HCT116 (cell line): ENCODE measurements at regions of chr7 and their contacts with region 1.

Region 1: GRCh38 chr7:155412537-155413253 is 45.2 kb upstream of the EN2 start:
- DNase-seq: peak; percentile 47
- ATAC-seq: peak; percentile 96
- H3K4me3 ChIP-seq: no peak overlapping the region; a peak in 1 of 4 replicates
- H3K27ac ChIP-seq: no peak overlapping the region
- H3K4me1 ChIP-seq: peaks cover 0 to 5% of the 10 kb centered on the region in 2 experiments; a peak in 1 of 4 replicates
- H3K27me3 ChIP-seq: no peaks in the 10 kb centered on the region
- CTCF ChIP-seq: peak; percentile 78 to 91 (median 84)
- POLR2A ChIP-seq: no peak
- RAD21 ChIP-seq: peak; percentile 62

Region 2: DNA sequence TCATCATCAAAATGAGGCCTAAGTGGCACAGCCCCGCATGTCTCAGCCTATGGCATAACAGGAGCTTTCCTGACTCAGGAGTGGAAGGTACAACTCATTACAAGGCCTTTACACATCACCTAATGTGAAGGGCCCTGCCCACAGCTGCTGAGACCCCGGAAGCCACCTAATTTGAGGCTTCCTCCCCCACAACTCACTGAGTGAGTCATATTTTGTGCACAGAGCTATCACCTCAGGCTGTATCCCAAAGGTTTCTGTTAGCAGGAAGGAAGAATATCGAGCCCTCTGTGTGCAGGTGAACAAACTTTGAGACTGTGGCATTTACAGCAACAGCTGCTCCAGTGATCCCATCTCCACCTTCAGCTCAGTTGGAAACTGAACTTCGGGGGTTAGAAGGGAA is 322.0 kb before region 1 on chr7:
- CTCF ChIA-PET with region 1: no interaction called
- POLR2A ChIA-PET with region 1: no interaction called
- RAD21 ChIA-PET with region 1: no interaction called
- intact Hi-C with region 1: no loop called
- DNase-seq: no peak
- ATAC-seq: no peak
- H3K4me3 ChIP-seq: no peak overlapping the region
- H3K27ac ChIP-seq: no peak overlapping the region
- H3K4me1 ChIP-seq: no peaks in the 10 kb centered on the region
- H3K27me3 ChIP-seq: peaks cover 43% of the 10 kb centered on the region
- CTCF ChIP-seq: no peak
- POLR2A ChIP-seq: no peak
- RAD21 ChIP-seq: no peak

Region 3: DNA sequence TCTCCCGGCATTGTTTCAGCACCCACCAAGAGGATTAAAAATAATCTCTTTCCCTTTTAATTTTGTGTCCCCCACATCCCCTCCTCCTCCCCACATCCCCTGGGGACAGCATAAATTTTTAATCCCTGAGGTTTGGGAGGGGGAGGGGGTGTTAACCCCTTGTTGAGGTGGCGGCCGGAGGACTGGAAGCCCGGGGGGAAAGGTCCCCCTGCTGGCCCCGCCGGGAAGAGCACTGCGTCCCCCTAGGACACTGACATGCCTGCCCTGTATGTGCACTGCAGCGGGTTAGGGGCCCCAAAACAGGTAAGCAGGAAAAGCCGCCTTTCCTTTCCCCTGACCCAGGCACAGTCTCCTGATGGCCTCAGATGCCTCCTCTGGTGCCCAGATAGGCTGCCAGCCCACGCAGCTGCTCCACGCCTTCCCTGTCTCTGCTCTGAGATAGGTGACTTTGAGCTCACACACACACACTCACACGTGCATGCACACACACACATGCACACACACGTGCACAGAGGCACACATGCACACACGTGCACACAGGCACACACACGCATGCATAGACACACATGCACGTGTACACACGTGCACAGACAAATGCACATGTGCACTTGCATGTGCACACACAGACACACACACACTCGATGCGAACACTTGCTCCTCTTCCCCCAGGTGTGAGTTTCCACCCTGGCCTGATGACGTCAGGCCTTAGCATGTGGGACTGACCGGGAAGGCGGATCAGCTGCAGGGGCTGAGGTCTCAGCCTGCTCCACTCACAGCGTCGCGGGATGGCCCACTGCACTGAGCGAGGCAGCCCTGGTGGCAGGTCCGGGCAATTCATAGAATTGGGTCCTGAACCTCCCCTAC is 121.4 kb after region 1 on chr7:
- CTCF ChIA-PET with region 1: no interaction called
- POLR2A ChIA-PET with region 1: no interaction called
- RAD21 ChIA-PET with region 1: no interaction called
- intact Hi-C with region 1: loop called (anchors 10 kb)
- DNase-seq: no peak
- ATAC-seq: peak; percentile 82
- H3K4me3 ChIP-seq: no peak overlapping the region
- H3K27ac ChIP-seq: no peak overlapping the region
- H3K4me1 ChIP-seq: no peaks in the 10 kb centered on the region
- H3K27me3 ChIP-seq: peaks cover 13% of the 10 kb centered on the region; the same call in 1 of the 2 replicates
- CTCF ChIP-seq: peak; percentile 29 to 70 (median 61); a peak in 4 of 6 replicates
- POLR2A ChIP-seq: no peak
- RAD21 ChIP-seq: peak; percentile 57

Region 4: GRCh38 chr7:155763691-155764437 is 351.2 kb after region 1 on chr7:
- CTCF ChIA-PET with region 1: interaction called, 3 read pairs
- POLR2A ChIA-PET with region 1: no interaction called
- RAD21 ChIA-PET with region 1: no interaction called
- intact Hi-C with region 1: loop called (anchors 1 kb)
- DNase-seq: no peak
- ATAC-seq: no peak
- H3K4me3 ChIP-seq: no peak overlapping the region
- H3K27ac ChIP-seq: no peak overlapping the region
- H3K4me1 ChIP-seq: no peaks in the 10 kb centered on the region
- H3K27me3 ChIP-seq: no peaks in the 10 kb centered on the region
- CTCF ChIP-seq: no peak
- POLR2A ChIP-seq: no peak
- RAD21 ChIP-seq: no peak